CD14-positive monocyte (primary cell): ENCODE measurements at regions of chr20 and their contacts with region 1.

Region 1: DNA sequence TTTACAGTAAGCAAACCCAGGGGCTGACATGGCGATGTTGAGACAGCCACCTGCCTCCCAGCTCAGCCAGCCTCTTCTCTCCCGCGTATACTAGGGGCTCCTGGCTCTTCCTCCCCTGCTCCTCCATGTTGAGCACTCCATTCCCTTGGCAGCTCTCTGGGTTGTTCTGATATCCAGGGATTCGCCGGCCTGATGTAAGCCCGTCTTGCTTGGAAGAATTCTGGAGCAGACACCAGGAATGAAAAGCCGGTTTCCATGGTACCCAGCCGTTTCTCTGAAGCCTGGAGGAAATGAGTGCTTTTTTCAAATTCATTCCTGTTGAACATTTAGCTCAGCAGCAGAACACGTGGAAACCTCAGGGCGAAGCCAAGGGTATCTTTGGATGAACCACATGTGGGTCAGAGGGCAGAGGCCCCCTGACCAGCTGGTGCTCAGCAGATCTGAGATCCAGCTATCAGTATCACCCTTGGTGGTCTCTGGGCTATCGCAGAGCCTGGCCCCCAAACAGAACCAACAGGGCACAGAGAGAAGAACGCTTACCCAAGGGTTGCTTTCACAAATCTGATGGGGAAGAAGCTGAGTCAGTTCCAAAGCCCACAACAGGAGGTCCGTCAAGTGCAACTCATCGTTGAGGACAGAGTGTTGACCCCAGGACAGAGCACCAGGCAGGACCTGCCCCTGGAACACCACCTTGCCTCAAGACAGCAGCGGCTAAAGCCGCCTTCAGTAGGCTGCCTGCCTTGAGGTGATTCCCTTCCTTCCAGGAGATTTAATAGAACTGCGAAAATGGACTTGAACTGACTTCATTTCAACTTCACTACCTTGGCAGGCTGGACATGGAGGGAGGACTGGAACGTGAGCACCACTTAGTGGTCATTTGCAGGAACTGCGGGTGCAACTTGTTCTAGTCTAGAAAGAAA is 96.1 kb upstream of the RIN2 start:
- DNase-seq: peak; percentile 54 to 78 (median 67)
- H3K4me3 ChIP-seq: no peak overlapping the region
- H3K4me3 Mint-ChIP-seq: peak overlapping the region in 1 of 2 donors; percentile 5
- H3K27ac ChIP-seq: no peak overlapping the region
- H3K27ac Mint-ChIP-seq: peak overlapping the region in 1 of 7 donors; percentile 77
- H3K4me1 ChIP-seq: peaks cover 14 to 16% of the 10 kb centered on the region in 2 donors
- H3K4me1 Mint-ChIP-seq: peaks cover 14% of the 10 kb centered on the region
- H3K27me3 ChIP-seq: no peaks in the 10 kb centered on the region
- H3K27me3 Mint-ChIP-seq: peaks cover 4 to 10% (median 8%) of the 10 kb centered on the region in 3 donors
- CTCF ChIP-seq: peak; percentile 98

Region 2: DNA sequence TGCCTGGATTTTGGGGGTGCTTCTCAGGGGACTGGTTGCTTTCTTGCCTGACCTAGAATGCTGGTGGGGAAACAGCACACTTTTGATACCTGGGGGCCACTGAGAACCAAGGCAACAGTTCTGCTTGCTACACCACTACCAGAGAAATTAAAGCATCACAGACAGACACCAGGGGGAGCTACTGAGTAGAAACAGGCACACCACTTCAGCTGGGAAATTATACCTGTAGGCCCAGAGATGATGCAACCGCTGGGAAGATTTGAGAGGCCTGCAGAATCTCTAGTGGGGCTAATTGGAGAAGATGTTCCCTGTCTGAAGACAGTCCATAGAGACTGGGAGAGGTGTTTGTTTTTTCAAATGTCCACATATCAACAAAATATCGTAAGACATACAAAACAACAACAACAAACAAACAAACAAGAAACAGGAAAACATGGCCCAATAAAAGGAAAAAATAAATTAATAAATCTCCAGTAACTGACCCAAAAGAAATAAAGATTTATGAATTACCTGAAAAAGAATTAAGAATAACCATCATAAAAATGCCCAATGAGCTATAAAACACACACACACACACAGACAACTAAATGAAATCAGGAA is 33.3 kb before region 1 on chr20:
- intact Hi-C with region 1: loop called (anchors 2 to 5 kb)
- DNase-seq: peak; percentile 42 to 69 (median 63)
- H3K4me3 ChIP-seq: no peak overlapping the region
- H3K4me3 Mint-ChIP-seq: no peak overlapping the region
- H3K27ac ChIP-seq: no peak overlapping the region
- H3K27ac Mint-ChIP-seq: no peak overlapping the region
- H3K4me1 ChIP-seq: no peaks in the 10 kb centered on the region
- H3K4me1 Mint-ChIP-seq: no peaks in the 10 kb centered on the region
- H3K27me3 ChIP-seq: no peaks in the 10 kb centered on the region
- H3K27me3 Mint-ChIP-seq: peaks cover 0 to 2% (median 0%) of the 10 kb centered on the region in 3 donors
- CTCF ChIP-seq: peak; percentile 83